ENCODE measurements at regions of chr4 and their contacts with region 1.

Region 1: DNA sequence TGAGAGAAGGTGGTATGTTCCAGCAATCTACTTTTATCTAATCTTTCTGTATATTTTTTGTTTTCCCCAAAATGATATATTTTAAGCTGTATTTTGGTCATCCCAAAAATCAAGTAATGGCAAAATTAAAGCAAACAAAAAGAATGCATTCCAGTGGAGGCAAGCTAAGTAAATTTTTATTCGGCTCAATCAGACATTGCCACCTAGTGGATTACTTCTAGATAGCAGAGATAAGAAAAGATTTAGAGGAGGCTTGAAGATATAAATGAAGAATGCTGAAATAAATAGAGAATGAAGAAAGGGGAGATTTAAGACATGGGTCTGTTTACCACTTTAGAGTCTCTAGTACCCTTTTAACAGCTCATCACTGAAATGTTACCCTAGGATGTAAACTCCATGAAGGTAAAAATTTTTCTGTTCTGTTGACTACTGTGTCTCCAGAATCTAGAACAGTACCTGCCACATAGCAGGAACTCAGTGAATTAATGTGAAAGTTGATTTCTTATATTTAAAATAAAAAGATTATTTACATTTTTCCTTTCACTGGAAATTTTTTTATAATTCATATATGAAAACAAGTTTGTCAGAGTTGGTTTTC is 110.9 kb upstream of the ANK2 start:
- DNase-seq: peak; percentile 57
- H3K4me3 Mint-ChIP-seq: no peak overlapping the region
- H3K27ac Mint-ChIP-seq: no peak overlapping the region
- H3K4me1 Mint-ChIP-seq: no peaks in the 10 kb centered on the region
- H3K27me3 Mint-ChIP-seq: no peaks in the 10 kb centered on the region
- CTCF ChIP-seq: peak; percentile 77

Region 2: GRCh38 chr4:112636688-112637551 is 301.6 kb before region 1 on chr4 and contains the starts of genes LARP7 and ZGRF1:
- CTCF ChIA-PET with region 1: interaction called, 13 read pairs
- POLR2A ChIA-PET with region 1: interaction called, 3 read pairs
- intact Hi-C with region 1: loop called (anchors 1 kb)
- DNase-seq: peak; percentile 99
- H3K4me3 Mint-ChIP-seq: no peak within 1 kb of the TSS
- H3K27ac Mint-ChIP-seq: no peak within 1 kb of the TSS
- H3K4me1 Mint-ChIP-seq: peaks cover 13% of the 10 kb centered on the region
- H3K27me3 Mint-ChIP-seq: no peaks in the 10 kb centered on the region
- CTCF ChIP-seq: peak; percentile 88
- total RNA-seq, gene LARP7: 33.8 and 36.3 TPM in 2 replicates
- total RNA-seq, gene ZGRF1: 6.1 and 6.9 TPM in 2 replicates

Region 3: GRCh38 chr4:112853662-112854256 is 84.8 kb before region 1 on chr4:
- CTCF ChIA-PET with region 1: interaction called, 162 read pairs
- POLR2A ChIA-PET with region 1: interaction called, 10 read pairs
- intact Hi-C with region 1: loop called (anchors 1 kb)
- DNase-seq: peak; percentile 37
- H3K4me3 Mint-ChIP-seq: no peak overlapping the region
- H3K27ac Mint-ChIP-seq: no peak overlapping the region
- H3K4me1 Mint-ChIP-seq: peaks cover 8% of the 10 kb centered on the region
- H3K27me3 Mint-ChIP-seq: no peaks in the 10 kb centered on the region
- CTCF ChIP-seq: peak; percentile 52

Region 4: GRCh38 chr4:112910109-112910736 is 28.3 kb before region 1 on chr4:
- CTCF ChIA-PET with region 1: interaction called, 10 read pairs
- POLR2A ChIA-PET with region 1: no interaction called
- intact Hi-C with region 1: no loop called
- DNase-seq: peak; percentile 54
- H3K4me3 Mint-ChIP-seq: peak overlapping the region; percentile 54
- H3K27ac Mint-ChIP-seq: no peak overlapping the region
- H3K4me1 Mint-ChIP-seq: peaks cover 7% of the 10 kb centered on the region
- H3K27me3 Mint-ChIP-seq: no peaks in the 10 kb centered on the region
- CTCF ChIP-seq: no peak

Region 5: DNA sequence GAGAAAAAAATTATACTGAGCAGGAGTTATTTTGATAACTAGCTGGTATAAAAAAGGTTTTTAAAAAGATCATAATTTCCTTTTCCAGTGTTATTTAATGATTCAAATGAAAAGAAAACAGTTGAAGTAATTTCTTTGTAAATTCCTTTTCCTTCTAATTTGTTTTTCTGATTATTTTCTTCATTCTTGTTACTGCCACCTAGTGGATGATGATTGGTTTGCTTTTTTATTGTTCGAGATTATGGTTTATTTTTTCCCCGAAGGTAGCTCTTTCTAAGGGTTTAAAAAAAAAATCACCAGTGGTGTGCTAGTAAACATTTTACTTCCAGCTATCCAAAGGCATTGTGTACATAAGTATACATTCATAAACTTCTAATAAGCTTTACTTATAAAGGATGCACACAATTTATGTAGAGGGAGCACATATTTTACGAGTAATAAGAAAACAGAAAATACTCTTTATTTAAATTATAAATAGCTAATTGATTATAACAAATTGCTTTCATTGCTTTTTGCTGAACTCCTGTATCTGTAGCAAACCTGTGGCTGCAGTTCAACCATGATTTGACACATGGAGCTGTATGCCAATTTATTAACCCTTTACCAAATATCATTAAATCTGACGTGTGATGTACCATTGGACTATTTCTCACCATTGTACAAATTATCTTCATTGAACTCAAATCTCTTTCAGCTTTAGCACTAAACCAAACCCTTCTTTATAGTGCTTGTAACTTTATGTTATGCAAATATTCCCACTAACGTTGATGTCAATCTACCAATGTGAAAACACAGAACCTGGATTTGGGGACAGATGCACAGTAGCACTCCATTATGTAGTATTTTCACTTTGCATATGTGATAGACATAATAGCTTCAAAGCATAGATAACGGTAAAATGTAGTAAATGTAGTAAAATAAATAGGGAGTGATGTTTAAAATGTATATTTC is 13.1 kb after region 1 on chr4:
- CTCF ChIA-PET with region 1: interaction called, 31 read pairs
- POLR2A ChIA-PET with region 1: interaction called, 5 read pairs
- intact Hi-C with region 1: no loop called
- DNase-seq: peak; percentile 21
- H3K4me3 Mint-ChIP-seq: no peak overlapping the region
- H3K27ac Mint-ChIP-seq: no peak overlapping the region
- H3K4me1 Mint-ChIP-seq: no peaks in the 10 kb centered on the region
- H3K27me3 Mint-ChIP-seq: no peaks in the 10 kb centered on the region
- CTCF ChIP-seq: peak; percentile 18

Region 6: DNA sequence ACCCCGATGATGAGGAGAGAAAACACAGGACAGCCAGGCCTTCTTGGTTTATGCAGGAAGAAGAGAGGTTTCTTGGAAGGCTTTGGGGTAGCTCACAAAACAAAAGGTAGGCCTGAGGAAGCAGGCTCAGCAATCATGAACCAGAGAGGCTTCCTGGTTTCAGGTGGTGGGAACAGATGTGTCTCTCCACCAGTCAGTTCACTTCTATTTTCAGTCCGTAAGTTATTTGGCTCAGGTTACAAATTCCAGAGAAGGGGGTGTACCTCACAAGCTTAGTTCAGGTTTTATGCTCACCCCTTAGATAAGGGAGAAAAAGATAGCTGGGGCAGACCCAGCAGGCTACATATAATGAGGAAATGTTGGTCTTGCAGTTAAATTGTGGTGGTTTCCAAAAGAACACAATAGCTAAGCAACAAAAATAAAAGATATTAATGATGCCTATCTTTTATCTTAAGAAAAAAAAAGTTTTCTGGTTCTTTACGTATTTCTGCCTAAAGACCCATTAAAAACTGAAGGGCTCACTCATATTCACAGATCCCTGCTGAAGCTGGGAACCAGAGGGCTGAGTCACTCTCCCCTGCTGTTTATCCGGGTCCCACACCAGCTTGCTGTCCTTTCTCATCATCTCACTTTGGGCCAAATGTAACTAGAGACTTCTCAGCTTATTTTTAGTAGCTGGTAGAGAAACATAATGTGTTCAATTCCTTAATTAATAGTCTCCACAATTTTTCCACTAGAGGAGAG is 646.0 kb after region 1 on chr4:
- CTCF ChIA-PET with region 1: no interaction called
- POLR2A ChIA-PET with region 1: no interaction called
- intact Hi-C with region 1: no loop called
- DNase-seq: peak; percentile 59
- H3K4me3 Mint-ChIP-seq: no peak overlapping the region
- H3K27ac Mint-ChIP-seq: no peak overlapping the region
- H3K4me1 Mint-ChIP-seq: no peaks in the 10 kb centered on the region
- H3K27me3 Mint-ChIP-seq: no peaks in the 10 kb centered on the region
- CTCF ChIP-seq: no peak

Region 7: GRCh38 chr4:114193624-114194399 is 1255.3 kb after region 1 on chr4:
- CTCF ChIA-PET with region 1: no interaction called
- POLR2A ChIA-PET with region 1: no interaction called
- intact Hi-C with region 1: no loop called
- DNase-seq: no peak
- H3K4me3 Mint-ChIP-seq: no peak overlapping the region
- H3K27ac Mint-ChIP-seq: no peak overlapping the region
- H3K4me1 Mint-ChIP-seq: no peaks in the 10 kb centered on the region
- H3K27me3 Mint-ChIP-seq: no peaks in the 10 kb centered on the region
- CTCF ChIP-seq: no peak